ENCODE measurements at regions of chr20 and their contacts with region 1.

Region 1: GRCh38 chr20:50980851-50981713 is 22.5 kb downstream of the MOCS3 start:
- DNase-seq: peak; percentile 80
- ATAC-seq: peak; percentile 43
- H3K4me3 Mint-ChIP-seq: no peak overlapping the region
- H3K27ac Mint-ChIP-seq: peak overlapping the region; percentile 83
- H3K4me1 Mint-ChIP-seq: peaks cover 18% of the 10 kb centered on the region
- H3K27me3 Mint-ChIP-seq: peaks cover 32% of the 10 kb centered on the region
- CTCF ChIP-seq: peak; percentile 92

Region 2: DNA sequence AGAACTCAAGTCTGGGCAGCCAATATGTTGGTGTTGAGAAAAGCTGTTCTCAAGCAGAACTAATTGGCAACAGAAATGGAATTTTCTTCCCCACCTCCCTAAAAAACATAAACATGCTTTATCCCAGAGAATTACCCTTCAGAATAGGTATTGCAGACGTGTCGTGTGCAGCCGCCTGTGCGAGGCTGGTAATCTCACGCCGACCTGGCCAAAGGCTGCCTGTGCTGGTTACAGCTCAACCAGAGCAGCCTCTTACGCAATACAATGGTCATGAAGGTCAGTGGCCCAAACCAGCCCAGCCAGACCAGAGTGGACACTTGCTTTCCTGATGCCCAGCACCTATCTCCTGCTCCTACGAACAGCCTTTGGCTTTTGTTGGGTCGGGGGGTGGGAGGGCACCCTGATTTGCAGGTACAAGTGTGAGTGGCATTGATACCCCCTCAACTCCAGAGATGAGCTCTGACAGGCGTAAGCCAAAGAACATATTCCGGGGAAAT is 300.6 kb before region 1 on chr20:
- CTCF ChIA-PET with region 1: no interaction called
- POLR2A ChIA-PET with region 1: no interaction called
- intact Hi-C with region 1: no loop called
- DNase-seq: no peak
- ATAC-seq: no peak
- H3K4me3 Mint-ChIP-seq: no peak overlapping the region
- H3K27ac Mint-ChIP-seq: no peak overlapping the region
- H3K4me1 Mint-ChIP-seq: no peaks in the 10 kb centered on the region
- H3K27me3 Mint-ChIP-seq: no peaks in the 10 kb centered on the region
- CTCF ChIP-seq: no peak

Region 3: GRCh38 chr20:50776122-50776817 is 204.8 kb before region 1 on chr20:
- CTCF ChIA-PET with region 1: no interaction called
- POLR2A ChIA-PET with region 1: no interaction called
- intact Hi-C with region 1: no loop called
- DNase-seq: no peak
- ATAC-seq: no peak
- H3K4me3 Mint-ChIP-seq: no peak overlapping the region
- H3K27ac Mint-ChIP-seq: no peak overlapping the region
- H3K4me1 Mint-ChIP-seq: peaks cover 6% of the 10 kb centered on the region
- H3K27me3 Mint-ChIP-seq: no peaks in the 10 kb centered on the region
- CTCF ChIP-seq: no peak

Region 4: DNA sequence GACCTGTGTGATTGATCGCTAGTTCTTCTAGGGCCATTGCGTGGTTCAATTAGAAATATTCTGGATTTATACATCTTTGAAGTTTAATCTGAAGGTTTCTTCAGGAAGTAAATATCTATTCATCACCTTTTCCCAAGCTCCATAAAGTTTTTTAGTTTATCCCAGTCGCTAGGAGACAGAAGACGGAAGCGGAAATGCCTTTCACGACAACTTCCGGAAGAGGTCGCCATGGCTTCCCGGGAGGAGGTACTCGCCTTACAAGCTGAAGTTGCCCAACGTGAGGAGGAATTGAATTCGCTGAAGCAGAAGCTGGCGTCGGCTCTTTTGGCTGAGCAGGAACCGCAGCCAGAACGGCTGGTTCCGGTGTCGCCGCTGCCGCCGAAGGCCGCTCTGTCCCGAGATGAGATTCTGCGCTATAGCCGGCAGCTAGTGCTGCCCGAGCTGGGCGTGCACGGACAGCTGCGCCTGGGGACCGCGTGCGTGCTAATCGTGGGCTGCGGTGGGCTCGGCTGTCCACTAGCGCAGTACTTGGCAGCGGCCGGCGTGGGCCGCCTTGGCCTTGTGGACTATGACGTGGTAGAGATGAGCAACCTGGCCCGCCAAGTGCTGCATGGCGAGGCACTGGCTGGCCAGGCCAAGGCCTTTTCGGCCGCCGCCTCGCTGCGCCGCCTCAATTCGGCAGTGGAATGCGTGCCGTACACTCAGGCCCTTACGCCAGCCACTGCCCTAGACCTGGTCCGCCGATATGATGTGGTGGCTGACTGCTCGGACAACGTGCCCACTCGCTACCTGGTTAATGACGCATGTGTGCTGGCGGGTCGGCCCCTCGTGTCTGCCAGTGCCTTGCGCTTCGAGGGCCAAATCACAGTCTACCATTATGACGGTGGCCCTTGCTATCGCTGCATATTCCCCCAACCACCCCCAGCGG is 22.2 kb before region 1 on chr20 and contains the start of gene MOCS3:
- CTCF ChIA-PET with region 1: interaction called, 25 read pairs
- POLR2A ChIA-PET with region 1: no interaction called
- intact Hi-C with region 1: no loop called
- DNase-seq: peak; percentile 85
- ATAC-seq: peak; percentile 84
- H3K4me3 Mint-ChIP-seq: peak within 1 kb of the TSS; percentile 96
- H3K27ac Mint-ChIP-seq: peak within 1 kb of the TSS; percentile 100
- H3K4me1 Mint-ChIP-seq: peaks cover 48% of the 10 kb centered on the region
- H3K27me3 Mint-ChIP-seq: no peaks in the 10 kb centered on the region
- CTCF ChIP-seq: no peak
- total RNA-seq, gene MOCS3: 4.6 TPM

Region 5: DNA sequence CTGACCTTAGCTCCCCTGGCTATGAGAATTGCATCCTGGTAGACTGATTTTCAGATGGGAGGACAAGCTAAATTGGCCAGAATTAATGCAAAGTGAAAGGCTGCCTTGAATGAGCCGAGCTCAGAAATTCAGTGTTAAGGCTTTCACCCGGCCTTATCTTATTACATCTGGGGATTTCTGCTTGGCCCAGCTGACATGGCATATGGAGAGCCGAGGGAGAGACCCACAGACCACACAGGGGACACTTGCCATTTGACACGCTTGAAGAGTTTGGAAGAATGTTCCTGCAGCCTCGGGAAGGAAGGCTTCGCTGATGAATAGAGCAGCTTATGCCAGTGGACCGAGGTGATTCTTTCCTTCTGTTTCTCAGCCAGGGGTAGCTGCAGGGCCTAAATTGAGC is 13.5 kb before region 1 on chr20:
- CTCF ChIA-PET with region 1: interaction called, 29 read pairs
- POLR2A ChIA-PET with region 1: no interaction called
- intact Hi-C with region 1: no loop called
- DNase-seq: no peak
- ATAC-seq: no peak
- H3K4me3 Mint-ChIP-seq: no peak overlapping the region
- H3K27ac Mint-ChIP-seq: no peak overlapping the region
- H3K4me1 Mint-ChIP-seq: peaks cover 2% of the 10 kb centered on the region
- H3K27me3 Mint-ChIP-seq: peaks cover 2% of the 10 kb centered on the region
- CTCF ChIP-seq: no peak

Region 6: DNA sequence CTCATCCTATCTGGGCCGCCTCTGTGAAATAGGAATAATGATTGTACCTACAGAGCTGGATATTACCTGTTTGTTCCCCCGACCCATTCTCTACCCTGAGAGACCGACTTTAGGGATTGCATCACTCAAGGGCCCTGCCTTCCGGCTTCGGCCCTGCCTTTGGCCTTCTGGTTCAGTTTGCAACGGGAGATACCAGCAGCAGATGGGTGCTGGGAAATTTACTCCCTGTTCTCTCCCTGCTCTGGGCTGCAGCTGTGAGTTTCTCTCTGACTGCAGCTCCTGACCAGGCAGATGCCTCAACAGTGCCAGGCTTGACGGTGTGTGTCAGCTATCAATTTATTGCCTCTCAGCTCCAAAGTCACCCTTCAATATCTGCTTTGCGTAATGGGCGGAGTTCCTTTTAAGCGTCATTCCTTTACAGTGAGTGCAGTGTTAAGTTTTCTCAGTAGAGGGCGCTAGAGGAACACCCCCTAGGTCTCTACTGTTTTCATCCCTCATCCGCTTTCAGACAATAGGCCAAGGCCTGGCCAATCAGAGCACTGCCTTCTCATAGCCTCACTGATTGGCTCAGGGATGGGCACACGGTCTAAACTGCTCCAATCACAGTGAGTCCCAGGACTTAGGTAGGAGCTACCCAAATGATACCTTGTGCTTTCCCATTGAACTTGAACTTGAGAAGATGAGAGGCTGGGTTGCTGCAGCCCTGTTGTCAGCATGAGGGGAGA is 11.8 kb after region 1 on chr20:
- CTCF ChIA-PET with region 1: interaction called, 39 read pairs
- POLR2A ChIA-PET with region 1: no interaction called
- intact Hi-C with region 1: no loop called
- DNase-seq: peak; percentile 74
- ATAC-seq: peak; percentile 100
- H3K4me3 Mint-ChIP-seq: no peak overlapping the region
- H3K27ac Mint-ChIP-seq: no peak overlapping the region
- H3K4me1 Mint-ChIP-seq: no peaks in the 10 kb centered on the region
- H3K27me3 Mint-ChIP-seq: no peaks in the 10 kb centered on the region
- CTCF ChIP-seq: peak; percentile 89

Measured in activated CD8-positive, alpha-beta T cell treated with anti-CD3 and anti-CD28 coated beads for 36 hours (primary cell).